MCF 10A (cell line): ENCODE measurements at regions of chr2 and their contacts with region 1.

Region 1: DNA sequence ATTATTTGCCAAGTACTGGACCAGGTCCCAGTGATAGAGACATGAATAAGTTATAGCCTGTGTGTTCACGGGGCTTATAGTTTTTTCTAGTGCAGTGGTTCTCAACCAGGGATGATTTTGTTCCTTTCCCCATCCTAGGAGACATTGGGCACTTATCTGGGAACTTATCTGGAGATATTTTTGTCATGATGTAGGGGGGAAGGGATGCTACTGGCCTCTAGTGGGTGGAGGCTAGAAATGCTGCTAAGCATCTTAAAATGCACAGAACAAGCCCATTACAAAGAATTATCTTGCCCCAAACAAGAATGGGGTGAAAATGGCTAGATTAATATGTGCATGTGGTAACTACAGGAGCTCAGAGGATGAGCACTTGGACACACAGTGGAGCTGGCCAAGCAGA is 75.2 kb downstream of the KLHL29 start:
- DNase-seq: peak; percentile 50
- H3K4me3 Mint-ChIP-seq: no peak overlapping the region
- H3K27ac Mint-ChIP-seq: no peak overlapping the region
- H3K4me1 Mint-ChIP-seq: no peaks in the 10 kb centered on the region
- H3K27me3 Mint-ChIP-seq: no peaks in the 10 kb centered on the region
- CTCF ChIP-seq: peak; percentile 42

Region 2: GRCh38 chr2:23199115-23199918 is 260.9 kb before region 1 on chr2:
- CTCF ChIA-PET with region 1: interaction called, 4 read pairs
- POLR2A ChIA-PET with region 1: no interaction called
- intact Hi-C with region 1: loop called (anchors 1 kb)
- DNase-seq: peak; percentile 62
- H3K4me3 Mint-ChIP-seq: no peak overlapping the region
- H3K27ac Mint-ChIP-seq: no peak overlapping the region
- H3K4me1 Mint-ChIP-seq: no peaks in the 10 kb centered on the region
- H3K27me3 Mint-ChIP-seq: peaks cover 80% of the 10 kb centered on the region
- CTCF ChIP-seq: peak; percentile 63

Region 3: GRCh38 chr2:23366720-23367119 is 93.5 kb before region 1 on chr2:
- CTCF ChIA-PET with region 1: interaction called, 13 read pairs
- POLR2A ChIA-PET with region 1: no interaction called
- intact Hi-C with region 1: loop called (anchors 5 kb)
- DNase-seq: peak; percentile 74
- H3K4me3 Mint-ChIP-seq: no peak overlapping the region
- H3K27ac Mint-ChIP-seq: peak overlapping the region; percentile 1
- H3K4me1 Mint-ChIP-seq: peaks cover 19% of the 10 kb centered on the region
- H3K27me3 Mint-ChIP-seq: no peaks in the 10 kb centered on the region
- CTCF ChIP-seq: peak; percentile 28

Region 4: DNA sequence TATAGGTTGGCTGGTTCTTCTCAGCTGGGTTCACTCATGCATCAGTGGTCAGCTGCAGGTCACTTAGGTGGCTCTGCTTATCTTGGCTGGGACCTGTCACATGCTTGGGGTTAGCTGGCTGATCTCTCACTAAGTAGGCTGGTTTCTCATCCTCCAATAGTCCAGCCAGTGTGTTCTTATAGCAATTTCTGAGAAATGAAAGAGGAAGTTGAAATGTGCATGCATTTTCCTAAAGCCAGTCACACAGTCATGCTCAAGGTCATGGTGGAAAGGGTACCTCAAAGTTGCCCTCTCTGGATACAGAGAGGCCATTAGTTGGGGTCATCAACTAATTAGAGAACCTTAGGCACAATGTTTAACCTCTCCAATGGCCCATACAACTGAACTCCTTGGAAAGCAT is 10.8 kb before region 1 on chr2:
- CTCF ChIA-PET with region 1: interaction called, 15 read pairs
- POLR2A ChIA-PET with region 1: interaction called, 3 read pairs
- intact Hi-C with region 1: no loop called
- DNase-seq: no peak
- H3K4me3 Mint-ChIP-seq: no peak overlapping the region
- H3K27ac Mint-ChIP-seq: no peak overlapping the region
- H3K4me1 Mint-ChIP-seq: peaks cover 14% of the 10 kb centered on the region
- H3K27me3 Mint-ChIP-seq: no peaks in the 10 kb centered on the region
- CTCF ChIP-seq: no peak

Region 5: DNA sequence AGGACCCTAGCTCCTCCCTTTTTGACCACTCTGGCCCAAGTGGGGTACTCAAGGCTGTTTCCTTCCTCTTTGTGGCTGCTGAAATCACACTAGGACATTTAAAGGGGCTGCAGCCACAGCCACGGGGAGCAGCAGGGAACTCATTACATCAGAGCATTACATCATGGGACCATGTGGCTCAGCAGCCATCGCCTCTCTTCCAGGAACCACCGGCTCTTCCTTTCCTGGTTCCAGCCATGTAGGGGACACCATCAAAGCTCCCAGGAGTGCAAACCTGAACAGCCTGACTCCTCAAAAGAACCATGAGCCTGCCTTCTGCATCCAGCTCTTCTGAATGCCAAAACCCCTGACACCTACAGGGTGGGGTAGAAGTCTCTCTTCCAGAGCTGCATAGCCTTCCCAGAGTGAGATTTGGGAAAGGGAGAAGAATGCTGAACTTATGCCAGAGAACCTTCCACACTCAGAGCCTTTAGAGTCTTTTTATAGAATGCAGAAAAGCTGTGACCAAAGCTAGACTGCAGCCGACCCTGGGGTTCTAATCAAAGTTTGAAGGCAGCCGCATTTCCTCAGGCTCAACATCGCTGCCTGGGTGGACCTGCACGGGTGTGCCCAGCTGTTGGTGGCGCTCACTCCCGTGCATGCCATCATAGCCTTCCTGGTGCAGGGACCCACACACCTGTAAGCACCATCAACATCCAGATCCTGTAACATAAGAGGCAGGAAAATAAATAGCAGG is 46.5 kb after region 1 on chr2:
- CTCF ChIA-PET with region 1: no interaction called
- POLR2A ChIA-PET with region 1: no interaction called
- intact Hi-C with region 1: no loop called
- DNase-seq: no peak
- H3K4me3 Mint-ChIP-seq: no peak overlapping the region
- H3K27ac Mint-ChIP-seq: no peak overlapping the region
- H3K4me1 Mint-ChIP-seq: peaks cover 16% of the 10 kb centered on the region
- H3K27me3 Mint-ChIP-seq: no peaks in the 10 kb centered on the region
- CTCF ChIP-seq: no peak